Mammary epithelial cell (primary cell): ENCODE measurements at regions of chr15 and their contacts with region 1.

Region 1: GRCh38 chr15:78108299-78109084 is 16.1 kb downstream of the SH2D7 start:
- DNase-seq: peak; percentile 62
- H3K4me3 ChIP-seq: no peak overlapping the region
- H3K27ac ChIP-seq: no peak overlapping the region
- H3K4me1 ChIP-seq: no peaks in the 10 kb centered on the region
- H3K27me3 ChIP-seq: no peaks in the 10 kb centered on the region
- CTCF ChIP-seq: peak; percentile 65 to 91

Region 2: DNA sequence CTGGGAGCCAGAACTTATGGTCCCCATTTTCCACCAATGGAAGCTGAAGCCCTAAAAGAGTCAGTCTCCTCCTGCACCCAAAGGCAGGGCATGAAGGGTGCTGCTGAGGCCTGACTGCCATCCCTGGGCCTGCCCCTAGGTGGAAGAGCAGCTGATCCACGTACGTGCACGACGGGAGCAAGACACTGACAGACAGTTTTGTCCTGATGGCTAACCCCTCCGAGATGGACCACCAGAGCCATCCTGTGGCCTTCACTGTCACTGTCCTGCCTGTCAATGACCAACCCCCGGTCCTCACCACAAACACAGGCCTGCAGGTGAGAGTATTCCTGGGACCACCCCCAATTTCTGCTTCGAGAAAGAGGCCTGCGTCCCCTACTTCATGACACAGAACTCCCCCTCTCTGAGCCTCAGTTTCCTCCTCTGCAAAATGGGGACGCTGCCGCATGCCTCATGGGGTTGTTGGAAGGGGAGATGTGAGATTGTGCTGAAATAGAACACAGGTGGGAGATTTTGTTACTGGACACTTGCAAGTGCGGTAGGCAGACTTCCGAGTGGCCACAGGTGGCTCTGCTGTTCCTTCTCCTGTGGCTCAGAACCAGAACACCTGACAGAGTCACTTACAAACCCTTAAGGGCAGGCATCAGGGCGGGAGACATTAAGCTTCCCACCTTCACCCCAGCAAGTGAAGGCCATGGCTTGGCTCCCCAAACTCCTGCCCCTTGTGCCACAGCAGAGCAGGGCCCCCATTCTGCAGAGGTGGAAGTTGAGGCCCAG is 206.3 kb before region 1 on chr15:
- CTCF ChIA-PET with region 1: no interaction called
- dilution Hi-C with region 1: no loop called
- in situ Hi-C with region 1: no loop called
- intact Hi-C with region 1: loop called (anchors 5 kb)
- DNase-seq: no peak
- H3K4me3 ChIP-seq: no peak overlapping the region
- H3K27ac ChIP-seq: no peak overlapping the region
- H3K4me1 ChIP-seq: peaks cover 3% of the 10 kb centered on the region
- H3K27me3 ChIP-seq: no peaks in the 10 kb centered on the region
- CTCF ChIP-seq: peak in 1 of 2 donors; percentile 17

Region 3: DNA sequence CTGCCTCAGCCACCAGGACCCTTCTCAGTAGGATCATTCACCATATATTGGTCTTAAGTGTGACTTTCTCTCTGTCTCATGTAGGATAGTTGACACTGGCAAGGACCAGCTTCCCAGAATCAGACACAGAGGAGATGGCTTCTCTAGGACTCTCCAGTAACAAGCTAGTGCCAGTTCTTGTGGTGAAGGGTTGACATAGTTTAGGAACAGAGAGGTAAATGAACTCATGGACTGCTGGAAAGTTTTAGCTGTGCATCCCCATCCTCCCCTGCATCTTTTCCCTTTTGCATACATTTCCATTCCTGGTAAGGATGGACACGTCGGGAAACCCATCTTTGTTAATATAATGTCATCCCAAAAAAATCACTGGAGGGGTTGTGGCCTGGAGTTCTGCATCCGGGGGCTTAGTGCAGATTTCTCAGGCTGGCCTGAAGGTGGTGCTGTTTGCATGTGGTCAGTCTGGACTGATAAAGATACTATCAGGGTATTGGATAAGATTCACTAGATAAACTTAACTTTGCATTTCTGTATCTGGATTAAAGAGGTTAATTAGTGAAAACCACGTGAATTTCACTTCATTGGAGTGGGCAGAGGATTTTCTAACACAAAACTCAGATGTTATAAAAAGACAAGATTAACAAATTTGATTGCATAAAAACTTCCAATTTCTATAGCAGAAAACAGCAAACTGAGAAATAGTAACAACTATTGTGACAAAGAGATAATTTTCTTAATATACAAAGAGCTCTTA is 141.8 kb before region 1 on chr15:
- CTCF ChIA-PET with region 1: interaction called, 3 read pairs
- dilution Hi-C with region 1: no loop called
- in situ Hi-C with region 1: loop called (anchors 5 kb)
- intact Hi-C with region 1: loop called (anchors 1 kb)
- DNase-seq: peak; percentile 24
- H3K4me3 ChIP-seq: no peak overlapping the region
- H3K27ac ChIP-seq: no peak overlapping the region
- H3K4me1 ChIP-seq: no peaks in the 10 kb centered on the region
- H3K27me3 ChIP-seq: no peaks in the 10 kb centered on the region
- CTCF ChIP-seq: peak; percentile 87 to 91

Region 4: GRCh38 chr15:78195735-78196201 is 87.3 kb after region 1 on chr15:
- CTCF ChIA-PET with region 1: interaction called, 6 read pairs
- dilution Hi-C with region 1: no loop called
- in situ Hi-C with region 1: loop called (anchors 5 kb)
- intact Hi-C with region 1: loop called (anchors 2 kb)
- DNase-seq: peak; percentile 31
- H3K4me3 ChIP-seq: no peak overlapping the region
- H3K27ac ChIP-seq: no peak overlapping the region
- H3K4me1 ChIP-seq: no peaks in the 10 kb centered on the region
- H3K27me3 ChIP-seq: no peaks in the 10 kb centered on the region
- CTCF ChIP-seq: peak; percentile 72 to 85

Region 5: GRCh38 chr15:78415286-78415685 is 306.8 kb after region 1 on chr15:
- CTCF ChIA-PET with region 1: no interaction called
- dilution Hi-C with region 1: no loop called
- in situ Hi-C with region 1: no loop called
- intact Hi-C with region 1: loop called (anchors 2 kb)
- DNase-seq: peak; percentile 22
- H3K4me3 ChIP-seq: no peak overlapping the region
- H3K27ac ChIP-seq: no peak overlapping the region
- H3K4me1 ChIP-seq: no peaks in the 10 kb centered on the region
- H3K27me3 ChIP-seq: no peaks in the 10 kb centered on the region
- CTCF ChIP-seq: peak; percentile 16 to 42